Activated T-helper 1 cell treated with anti-CD3 and anti-CD28 coated beads, Interleukin-12 subunit alpha, Interleukin-12 subunit beta, Interleukin-2, Interleukin-4 antibody, amounts not matched to agents 30 ng/mL and 10 ng/mL and 1 ng/mL, durations not matched to agents 14 hours and 24 hours and 36 hours (primary cell): ENCODE measurements at regions of chr11 and their contacts with region 1.

Region 1: GRCh38 chr11:36417154-36417553 is 92.9 kb downstream of the TRAF6 start:
- DNase-seq: no peak
- H3K4me3 Mint-ChIP-seq: peak overlapping the region; percentile 78
- H3K27ac Mint-ChIP-seq: peak overlapping the region; percentile 64
- H3K4me1 Mint-ChIP-seq: peaks cover 76% of the 10 kb centered on the region
- H3K27me3 Mint-ChIP-seq: no peaks in the 10 kb centered on the region

Region 2: GRCh38 chr11:36316049-36316772 is 100.9 kb before region 1 on chr11:
- intact Hi-C with region 1: no loop called
- DNase-seq: no peak
- H3K4me3 Mint-ChIP-seq: no peak overlapping the region
- H3K27ac Mint-ChIP-seq: no peak overlapping the region
- H3K4me1 Mint-ChIP-seq: peaks cover 12% of the 10 kb centered on the region
- H3K27me3 Mint-ChIP-seq: peaks cover 40% of the 10 kb centered on the region

Region 3: GRCh38 chr11:36431429-36432092 is 14.4 kb after region 1 on chr11:
- intact Hi-C with region 1: loop called (anchors 1 kb)
- DNase-seq: no peak
- H3K4me3 Mint-ChIP-seq: peak overlapping the region; percentile 54
- H3K27ac Mint-ChIP-seq: peak overlapping the region; percentile 76
- H3K4me1 Mint-ChIP-seq: peaks cover 50% of the 10 kb centered on the region
- H3K27me3 Mint-ChIP-seq: no peaks in the 10 kb centered on the region